Tibial artery (tissue), 4 donors: ENCODE measurements at regions of chr17 and their contacts with region 1.

Region 1: DNA sequence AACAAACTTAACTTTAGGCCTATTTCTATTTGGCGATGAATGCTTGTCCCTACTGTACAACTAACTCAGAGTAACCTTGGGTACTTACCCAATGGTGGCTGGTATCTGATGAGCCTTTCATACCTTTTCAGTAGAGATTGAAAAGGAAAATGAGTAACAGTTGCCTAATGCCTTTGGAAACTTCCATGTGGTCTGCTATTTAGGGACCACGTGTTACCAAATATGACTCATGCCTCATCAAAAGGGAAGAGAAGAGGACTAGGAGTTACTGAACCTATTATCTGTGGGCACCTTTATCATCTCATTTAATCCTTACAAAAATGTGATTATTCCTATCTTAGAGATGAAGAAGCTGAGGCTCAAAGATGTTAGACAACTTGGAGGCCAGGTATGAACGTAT is 8.1 kb downstream of the MYOCD start:
- DNase-seq: no peak
- H3K4me3 ChIP-seq: no peak overlapping the region
- H3K27ac ChIP-seq: peak overlapping the region in 1 of 2 donors; percentile 97
- H3K4me1 ChIP-seq: peaks cover 0 to 67% (median 10%) of the 10 kb centered on the region in 4 donors
- H3K27me3 ChIP-seq: no peaks in the 10 kb centered on the region
- CTCF ChIP-seq: no peak

Region 2: DNA sequence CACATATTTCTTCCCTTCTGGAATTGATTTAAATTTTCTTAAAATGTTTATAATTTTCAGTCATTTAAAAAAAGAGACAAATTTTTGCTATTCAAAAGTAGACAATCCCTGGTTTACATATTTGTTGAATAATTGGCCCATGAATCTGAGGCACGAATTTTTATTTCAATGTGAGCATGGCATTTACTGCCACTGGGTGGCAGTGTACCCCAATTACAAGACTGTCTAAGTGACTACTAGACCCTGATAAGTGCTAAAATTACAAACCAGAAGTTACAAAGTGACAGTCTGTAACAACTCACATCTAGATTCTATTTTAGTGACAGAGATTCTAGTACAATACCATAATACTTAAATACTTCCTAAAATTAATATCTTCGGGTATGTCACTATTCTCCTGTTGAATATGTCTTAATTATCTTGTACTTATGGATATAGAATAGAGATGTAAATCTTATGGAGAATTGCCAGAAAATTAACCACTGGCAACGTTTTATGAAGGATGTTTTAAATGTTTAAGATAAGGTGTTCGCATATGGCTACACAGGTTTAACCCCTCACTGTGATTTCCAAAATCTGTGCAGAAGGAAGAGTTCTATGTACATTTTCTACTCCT is 417.3 kb before region 1 on chr17:
- intact Hi-C with region 1: loop called (anchors 2 kb)
- DNase-seq: peak in 1 of 2 donors; percentile 39
- H3K4me3 ChIP-seq: no peak overlapping the region
- H3K27ac ChIP-seq: no peak overlapping the region
- H3K4me1 ChIP-seq: peaks cover 0 to 14% (median 0%) of the 10 kb centered on the region in 4 donors
- H3K27me3 ChIP-seq: no peaks in the 10 kb centered on the region
- CTCF ChIP-seq: peak; percentile 81 to 85

Region 3: GRCh38 chr17:13569398-13570123 is 895.8 kb after region 1 on chr17:
- intact Hi-C with region 1: loop called (anchors 5 kb)
- DNase-seq: no peak
- H3K4me3 ChIP-seq: no peak overlapping the region
- H3K27ac ChIP-seq: no peak overlapping the region
- H3K4me1 ChIP-seq: no peaks in the 10 kb centered on the region
- H3K27me3 ChIP-seq: peaks cover 0 to 4% of the 10 kb centered on the region in 2 donors
- CTCF ChIP-seq: no peak